ENCODE measurements at regions of chr5 and their contacts with region 1.

Region 1: GRCh38 chr5:83752700-83753099 is 32.0 kb upstream of the HAPLN1 start:
- DNase-seq: no peak
- ATAC-seq: no peak
- H3K4me3 ChIP-seq: no peak overlapping the region
- H3K4me3 Mint-ChIP-seq: no peak overlapping the region
- H3K27ac ChIP-seq: no peak overlapping the region
- H3K27ac Mint-ChIP-seq: no peak overlapping the region
- H3K4me1 ChIP-seq: no peaks in the 10 kb centered on the region
- H3K4me1 Mint-ChIP-seq: no peaks in the 10 kb centered on the region
- H3K27me3 ChIP-seq: no peaks in the 10 kb centered on the region
- H3K27me3 Mint-ChIP-seq: no peaks in the 10 kb centered on the region
- CTCF ChIP-seq: no peak

Region 2: GRCh38 chr5:83764101-83764500 is 11.4 kb after region 1 on chr5:
- intact Hi-C with region 1: loop called (anchors 1 kb)
- DNase-seq: no peak
- ATAC-seq: no peak
- H3K4me3 ChIP-seq: no peak overlapping the region
- H3K4me3 Mint-ChIP-seq: no peak overlapping the region
- H3K27ac ChIP-seq: no peak overlapping the region
- H3K27ac Mint-ChIP-seq: no peak overlapping the region
- H3K4me1 ChIP-seq: no peaks in the 10 kb centered on the region
- H3K4me1 Mint-ChIP-seq: no peaks in the 10 kb centered on the region
- H3K27me3 ChIP-seq: no peaks in the 10 kb centered on the region
- H3K27me3 Mint-ChIP-seq: no peaks in the 10 kb centered on the region
- CTCF ChIP-seq: no peak

Region 3: DNA sequence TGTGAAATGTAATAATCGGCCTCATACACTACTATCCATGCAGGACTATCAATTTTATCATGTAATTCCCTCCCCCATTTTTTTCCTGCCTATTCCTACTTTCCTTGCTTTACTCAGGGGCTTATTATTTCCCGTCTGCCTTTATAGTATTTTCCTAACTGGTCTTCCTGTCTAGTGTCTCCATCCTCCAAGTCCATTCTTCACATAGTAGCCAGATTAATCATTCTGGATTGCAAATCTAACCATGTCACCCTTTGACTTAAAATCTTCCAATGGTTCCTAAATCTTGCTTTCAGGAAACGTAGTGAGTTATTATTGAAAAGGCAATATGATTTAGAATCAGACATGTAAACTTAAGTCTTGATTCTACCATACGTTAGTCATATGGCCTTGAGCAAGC is 275.4 kb after region 1 on chr5:
- intact Hi-C with region 1: no loop called
- DNase-seq: no peak
- ATAC-seq: no peak
- H3K4me3 ChIP-seq: no peak overlapping the region
- H3K4me3 Mint-ChIP-seq: no peak overlapping the region
- H3K27ac ChIP-seq: no peak overlapping the region
- H3K27ac Mint-ChIP-seq: no peak overlapping the region
- H3K4me1 ChIP-seq: no peaks in the 10 kb centered on the region
- H3K4me1 Mint-ChIP-seq: no peaks in the 10 kb centered on the region
- H3K27me3 ChIP-seq: no peaks in the 10 kb centered on the region
- H3K27me3 Mint-ChIP-seq: no peaks in the 10 kb centered on the region
- CTCF ChIP-seq: no peak

Measured in natural killer cell (primary cell).